MCF 10A (cell line): ENCODE measurements at regions of chr3 and their contacts with region 1.

Region 1: DNA sequence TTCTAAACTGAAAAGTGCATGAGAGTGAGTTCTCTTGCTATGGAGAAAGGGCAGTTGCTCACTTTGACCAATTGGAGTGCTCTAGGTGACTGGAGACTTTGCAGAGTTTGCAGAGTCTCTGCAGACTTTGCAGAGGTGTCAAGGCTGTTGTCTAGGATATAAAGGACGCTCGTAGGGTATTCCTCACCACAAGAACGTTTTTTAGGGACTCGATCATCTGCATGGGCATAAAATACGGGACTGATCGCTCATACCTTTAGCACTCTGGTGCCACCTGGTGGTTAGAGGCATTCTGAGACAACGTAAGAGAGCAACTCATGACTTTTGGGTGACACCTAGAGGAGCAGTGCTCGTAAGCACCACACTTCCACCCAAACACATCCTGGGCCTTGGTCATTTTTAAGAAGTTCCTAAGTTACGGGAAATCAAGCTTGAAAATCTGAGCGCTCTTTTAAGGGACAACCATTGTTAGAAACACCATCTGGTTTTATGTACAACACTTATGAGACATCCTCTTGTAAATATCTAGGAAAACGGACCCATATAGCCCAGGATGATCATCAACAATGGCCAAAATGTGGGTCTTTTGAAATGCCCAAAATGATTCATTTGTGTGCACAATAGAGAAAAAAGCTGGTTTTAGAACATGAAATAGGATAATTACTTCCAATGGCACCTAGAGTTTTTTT is 51.6 kb upstream of the XCR1 start:
- DNase-seq: peak; percentile 96
- H3K4me3 Mint-ChIP-seq: no peak overlapping the region
- H3K27ac Mint-ChIP-seq: no peak overlapping the region
- H3K4me1 Mint-ChIP-seq: peaks cover 5% of the 10 kb centered on the region
- H3K27me3 Mint-ChIP-seq: peaks cover 11% of the 10 kb centered on the region
- CTCF ChIP-seq: peak; percentile 98

Region 2: DNA sequence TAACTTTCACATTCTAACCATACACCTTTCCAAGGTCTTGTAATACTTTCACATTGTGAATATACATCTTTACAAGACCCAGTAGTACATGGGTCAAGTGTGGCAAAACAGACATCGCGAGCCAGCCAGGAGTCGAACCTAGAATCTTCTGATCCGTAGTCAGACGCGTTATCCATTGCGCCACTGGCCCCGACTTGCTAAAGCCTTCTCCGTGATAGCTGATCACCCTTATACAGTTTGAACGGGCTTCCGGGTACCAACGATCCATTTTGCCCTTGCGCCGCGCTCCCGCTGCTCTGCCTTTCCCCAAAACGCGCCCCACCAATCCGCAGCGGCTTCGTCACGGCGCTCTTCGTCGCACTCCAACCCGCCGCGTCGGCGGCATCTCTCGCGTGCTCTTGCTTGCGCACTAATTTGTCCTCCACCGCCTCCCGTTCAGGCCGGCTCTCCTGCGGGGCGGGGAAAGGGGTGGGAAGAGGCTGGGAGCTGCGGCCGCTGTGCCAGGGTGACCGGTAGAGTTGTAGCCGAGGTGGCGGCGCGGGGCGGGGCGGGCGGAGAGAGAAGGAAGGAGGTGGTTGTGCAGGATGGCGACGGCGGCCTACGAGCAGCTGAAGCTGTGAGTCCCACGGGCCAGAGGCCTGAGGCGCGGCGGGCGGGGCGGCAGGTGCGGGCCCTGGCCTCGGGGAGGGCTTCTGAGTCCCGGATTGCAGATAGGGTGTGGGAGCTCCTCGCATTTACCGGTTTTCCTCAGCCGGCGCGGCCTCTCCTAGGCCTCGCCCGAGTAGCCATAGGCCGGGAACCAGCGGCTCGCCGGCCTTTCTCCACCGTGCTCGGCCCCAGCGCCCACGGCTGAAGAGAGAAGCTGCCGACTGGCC is 389.7 kb before region 1 on chr3 and contains the start of gene SACM1L:
- CTCF ChIA-PET with region 1: no interaction called
- POLR2A ChIA-PET with region 1: no interaction called
- intact Hi-C with region 1: no loop called
- DNase-seq: peak; percentile 98
- H3K4me3 Mint-ChIP-seq: peak within 1 kb of the TSS; percentile 74
- H3K27ac Mint-ChIP-seq: peak within 1 kb of the TSS; percentile 30
- H3K4me1 Mint-ChIP-seq: peaks cover 25% of the 10 kb centered on the region
- H3K27me3 Mint-ChIP-seq: no peaks in the 10 kb centered on the region
- CTCF ChIP-seq: no peak
- total RNA-seq, gene SACM1L: 39.3 and 44.5 TPM in 2 replicates

Region 3: GRCh38 chr3:45760878-45761711 is 317.8 kb before region 1 on chr3:
- CTCF ChIA-PET with region 1: interaction called, 13 read pairs
- POLR2A ChIA-PET with region 1: no interaction called
- intact Hi-C with region 1: loop called (anchors 1 kb)
- DNase-seq: peak; percentile 62
- H3K4me3 Mint-ChIP-seq: no peak overlapping the region
- H3K27ac Mint-ChIP-seq: no peak overlapping the region
- H3K4me1 Mint-ChIP-seq: peaks cover 6% of the 10 kb centered on the region
- H3K27me3 Mint-ChIP-seq: no peaks in the 10 kb centered on the region
- CTCF ChIP-seq: peak; percentile 75

Region 4: DNA sequence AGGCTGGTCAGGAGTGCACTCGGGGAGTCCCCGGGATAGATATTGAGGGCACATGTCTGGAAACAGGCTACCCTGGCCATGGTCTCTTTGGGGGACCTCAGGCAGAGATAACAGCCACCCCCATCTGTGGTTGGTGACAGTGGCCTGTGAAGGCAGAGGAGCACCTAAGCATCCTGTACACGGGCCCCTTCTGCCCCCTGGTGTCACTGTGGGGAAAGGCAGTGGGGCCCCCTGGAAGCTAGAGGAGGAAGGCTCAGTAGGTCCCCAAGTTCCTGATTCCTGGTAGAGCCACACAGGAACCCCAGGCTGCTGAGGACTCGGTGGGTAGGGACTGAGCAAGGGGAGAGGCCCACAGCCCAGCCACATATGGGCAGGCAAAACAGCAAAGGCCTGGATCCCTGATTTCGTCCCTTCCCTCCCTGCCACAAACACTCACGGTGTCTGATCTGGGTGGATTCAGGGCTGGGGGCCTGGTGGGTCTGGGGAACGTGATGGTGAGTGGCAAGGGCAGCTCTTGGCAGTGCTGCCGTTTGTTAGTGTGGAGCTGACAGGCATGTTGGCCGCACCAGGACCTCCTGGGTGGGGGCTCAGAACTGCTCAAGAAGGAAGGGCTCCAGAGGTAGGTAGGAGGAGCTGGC is 149.7 kb before region 1 on chr3:
- CTCF ChIA-PET with region 1: interaction called, 241 read pairs
- POLR2A ChIA-PET with region 1: no interaction called
- intact Hi-C with region 1: no loop called
- DNase-seq: peak; percentile 51
- H3K4me3 Mint-ChIP-seq: no peak overlapping the region
- H3K27ac Mint-ChIP-seq: no peak overlapping the region
- H3K4me1 Mint-ChIP-seq: no peaks in the 10 kb centered on the region
- H3K27me3 Mint-ChIP-seq: no peaks in the 10 kb centered on the region
- CTCF ChIP-seq: peak; percentile 61

Region 5: GRCh38 chr3:45972534-45973402 is 106.1 kb before region 1 on chr3:
- CTCF ChIA-PET with region 1: interaction called, 16 read pairs
- POLR2A ChIA-PET with region 1: interaction called, 4 read pairs
- intact Hi-C with region 1: no loop called
- DNase-seq: peak; percentile 89
- H3K4me3 Mint-ChIP-seq: no peak overlapping the region
- H3K27ac Mint-ChIP-seq: peak overlapping the region; percentile 75
- H3K4me1 Mint-ChIP-seq: peaks cover 10% of the 10 kb centered on the region
- H3K27me3 Mint-ChIP-seq: no peaks in the 10 kb centered on the region
- CTCF ChIP-seq: no peak

Region 6: DNA sequence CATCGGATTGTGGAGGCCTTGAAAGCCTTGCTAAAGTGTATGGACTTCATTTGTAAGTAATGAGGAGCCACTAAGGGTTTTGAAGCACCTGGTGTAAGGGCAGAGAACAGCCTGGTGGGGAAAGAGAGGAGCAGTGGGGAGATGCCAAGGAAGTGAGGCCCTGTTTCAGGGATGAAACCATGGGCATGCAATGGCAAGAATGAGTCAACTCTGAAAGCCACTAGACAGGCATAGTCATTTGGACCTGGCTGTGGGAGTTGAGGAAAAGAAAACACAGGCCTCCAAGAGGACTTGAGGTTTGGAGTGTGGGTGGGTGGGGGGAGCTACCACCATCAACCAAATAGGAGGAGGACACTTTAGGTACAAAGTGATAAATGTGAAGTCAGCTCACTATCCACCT is 59.1 kb before region 1 on chr3:
- CTCF ChIA-PET with region 1: no interaction called
- POLR2A ChIA-PET with region 1: no interaction called
- intact Hi-C with region 1: no loop called
- DNase-seq: no peak
- H3K4me3 Mint-ChIP-seq: no peak overlapping the region
- H3K27ac Mint-ChIP-seq: no peak overlapping the region
- H3K4me1 Mint-ChIP-seq: no peaks in the 10 kb centered on the region
- H3K27me3 Mint-ChIP-seq: no peaks in the 10 kb centered on the region
- CTCF ChIP-seq: no peak

Region 7: GRCh38 chr3:46089237-46090011 is 10.6 kb after region 1 on chr3:
- CTCF ChIA-PET with region 1: interaction called, 35 read pairs
- POLR2A ChIA-PET with region 1: no interaction called
- intact Hi-C with region 1: no loop called
- DNase-seq: peak; percentile 77
- H3K4me3 Mint-ChIP-seq: no peak overlapping the region
- H3K27ac Mint-ChIP-seq: peak overlapping the region; percentile 28
- H3K4me1 Mint-ChIP-seq: peaks cover 4% of the 10 kb centered on the region
- H3K27me3 Mint-ChIP-seq: no peaks in the 10 kb centered on the region
- CTCF ChIP-seq: no peak

Region 8: GRCh38 chr3:47634996-47635395 is 1556.1 kb after region 1 on chr3:
- CTCF ChIA-PET with region 1: no interaction called
- POLR2A ChIA-PET with region 1: no interaction called
- intact Hi-C with region 1: no loop called
- DNase-seq: no peak
- H3K4me3 Mint-ChIP-seq: no peak overlapping the region
- H3K27ac Mint-ChIP-seq: no peak overlapping the region
- H3K4me1 Mint-ChIP-seq: no peaks in the 10 kb centered on the region
- H3K27me3 Mint-ChIP-seq: no peaks in the 10 kb centered on the region
- CTCF ChIP-seq: no peak